ENCODE measurements at regions of chrX and their contacts with region 1.

Region 1: GRCh38 chrX:19382555-19383145 is 38.9 kb downstream of the PDHA1 start:
- DNase-seq: peak; percentile 65
- H3K4me3 Mint-ChIP-seq: no peak overlapping the region
- H3K27ac Mint-ChIP-seq: no peak overlapping the region
- H3K4me1 Mint-ChIP-seq: no peaks in the 10 kb centered on the region
- H3K27me3 Mint-ChIP-seq: peaks cover 3% of the 10 kb centered on the region

Region 2: GRCh38 chrX:19372170-19372546 is 10.5 kb before region 1 on chrX:
- CTCF ChIA-PET with region 1: interaction called, 10 read pairs
- POLR2A ChIA-PET with region 1: no interaction called
- DNase-seq: peak; percentile 57
- H3K4me3 Mint-ChIP-seq: peak overlapping the region; percentile 42
- H3K27ac Mint-ChIP-seq: no peak overlapping the region
- H3K4me1 Mint-ChIP-seq: peaks cover 5% of the 10 kb centered on the region
- H3K27me3 Mint-ChIP-seq: no peaks in the 10 kb centered on the region

Region 3: DNA sequence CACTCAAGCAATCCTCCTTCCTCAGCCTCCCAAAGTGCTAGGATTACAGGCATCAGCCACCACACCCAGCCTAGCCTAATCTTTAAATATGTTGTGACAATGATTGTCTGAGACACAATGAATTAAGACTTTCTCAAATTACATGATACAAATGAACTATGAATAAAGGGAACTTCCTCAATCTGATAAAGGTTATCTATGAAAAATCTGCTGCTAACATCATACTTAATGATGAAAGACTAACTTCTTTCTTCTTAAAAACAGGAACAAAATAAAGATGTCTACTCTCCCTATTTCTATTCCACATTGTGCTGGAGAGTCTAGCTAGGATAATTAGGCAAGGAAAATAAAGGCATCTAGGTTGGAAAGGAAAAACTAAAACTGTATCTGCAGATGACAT is 21.0 kb after region 1 on chrX:
- CTCF ChIA-PET with region 1: no interaction called
- POLR2A ChIA-PET with region 1: no interaction called
- DNase-seq: no peak
- H3K4me3 Mint-ChIP-seq: no peak overlapping the region
- H3K27ac Mint-ChIP-seq: no peak overlapping the region
- H3K4me1 Mint-ChIP-seq: no peaks in the 10 kb centered on the region
- H3K27me3 Mint-ChIP-seq: peaks cover 7% of the 10 kb centered on the region